Activated T-helper 1 cell treated with anti-CD3 and anti-CD28 coated beads, Interleukin-12 subunit alpha, Interleukin-12 subunit beta, Interleukin-2, Interleukin-4 antibody, amounts not matched to agents 30 ng/mL and 10 ng/mL and 1 ng/mL, durations not matched to agents 14 hours and 24 hours and 36 hours (primary cell): ENCODE measurements at regions of chr14 and their contacts with region 1.

Region 1: DNA sequence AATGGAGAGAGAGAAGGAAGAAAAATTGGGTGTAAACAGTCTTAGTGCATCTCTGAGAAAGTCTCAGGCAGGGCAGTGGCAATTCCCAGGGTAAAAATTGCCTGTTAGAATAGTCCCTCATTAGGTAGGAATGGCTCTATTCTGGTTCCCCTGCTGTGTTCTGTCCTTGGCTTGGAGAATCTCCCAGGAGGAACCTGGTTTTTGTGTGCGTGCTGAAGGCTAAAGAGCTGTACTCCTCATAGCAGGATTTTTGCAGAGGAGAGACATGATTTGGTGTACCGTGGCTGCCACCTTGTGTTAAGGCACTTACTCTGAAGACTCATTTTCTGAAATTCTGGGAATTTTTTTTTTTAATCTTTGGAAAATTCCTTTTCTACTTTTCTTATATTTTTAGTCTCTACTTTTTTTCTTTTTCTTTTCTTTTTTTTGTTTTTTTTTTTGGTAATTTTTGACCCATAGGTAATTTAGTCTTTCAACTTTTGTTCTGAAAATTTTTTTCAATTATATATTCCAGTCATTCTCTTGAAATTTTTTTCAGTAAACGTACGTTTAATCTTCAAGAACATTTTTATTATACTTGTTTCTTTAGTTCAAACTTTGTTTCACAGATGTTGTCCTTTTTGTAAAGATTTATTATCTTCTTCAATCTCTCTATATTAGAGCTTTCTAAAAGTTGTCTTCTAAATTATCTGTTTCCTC is 63.8 kb downstream of the FBXO33 start:
- DNase-seq: no peak
- H3K4me3 Mint-ChIP-seq: no peak overlapping the region
- H3K27ac Mint-ChIP-seq: no peak overlapping the region
- H3K4me1 Mint-ChIP-seq: no peaks in the 10 kb centered on the region
- H3K27me3 Mint-ChIP-seq: no peaks in the 10 kb centered on the region

Region 2: GRCh38 chr14:38536376-38537038 is 831.9 kb before region 1 on chr14:
- intact Hi-C with region 1: no loop called
- DNase-seq: no peak
- H3K4me3 Mint-ChIP-seq: no peak overlapping the region
- H3K27ac Mint-ChIP-seq: no peak overlapping the region
- H3K4me1 Mint-ChIP-seq: no peaks in the 10 kb centered on the region
- H3K27me3 Mint-ChIP-seq: no peaks in the 10 kb centered on the region

Region 3: DNA sequence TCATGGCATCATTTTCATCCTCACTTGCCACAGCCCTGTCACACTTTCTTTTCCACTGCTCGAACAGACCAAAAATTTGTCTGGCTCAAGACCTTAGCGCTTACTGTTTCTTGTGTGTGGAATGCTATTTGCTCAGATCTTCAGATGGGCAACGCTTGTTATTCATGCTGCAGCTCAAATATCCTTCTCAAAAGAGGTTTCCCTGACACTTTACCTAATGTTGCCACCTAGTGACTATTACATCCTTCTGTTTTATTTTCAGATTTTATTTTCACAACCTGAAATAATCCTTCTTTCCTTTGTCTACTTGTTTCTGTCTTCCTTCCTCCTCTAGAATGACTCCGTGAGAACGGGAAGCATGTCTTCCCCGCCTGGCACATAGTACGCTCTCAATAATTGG is 58.2 kb after region 1 on chr14:
- intact Hi-C with region 1: loop called (anchors 5 kb)
- DNase-seq: no peak
- H3K4me3 Mint-ChIP-seq: no peak overlapping the region
- H3K27ac Mint-ChIP-seq: no peak overlapping the region
- H3K4me1 Mint-ChIP-seq: peaks cover 58% of the 10 kb centered on the region
- H3K27me3 Mint-ChIP-seq: no peaks in the 10 kb centered on the region